Activated naive CD4-positive, alpha-beta T cell treated with anti-CD3 and anti-CD28 coated beads for 36 hours (primary cell): ENCODE measurements at regions of chr11 and their contacts with region 1.

Region 1: DNA sequence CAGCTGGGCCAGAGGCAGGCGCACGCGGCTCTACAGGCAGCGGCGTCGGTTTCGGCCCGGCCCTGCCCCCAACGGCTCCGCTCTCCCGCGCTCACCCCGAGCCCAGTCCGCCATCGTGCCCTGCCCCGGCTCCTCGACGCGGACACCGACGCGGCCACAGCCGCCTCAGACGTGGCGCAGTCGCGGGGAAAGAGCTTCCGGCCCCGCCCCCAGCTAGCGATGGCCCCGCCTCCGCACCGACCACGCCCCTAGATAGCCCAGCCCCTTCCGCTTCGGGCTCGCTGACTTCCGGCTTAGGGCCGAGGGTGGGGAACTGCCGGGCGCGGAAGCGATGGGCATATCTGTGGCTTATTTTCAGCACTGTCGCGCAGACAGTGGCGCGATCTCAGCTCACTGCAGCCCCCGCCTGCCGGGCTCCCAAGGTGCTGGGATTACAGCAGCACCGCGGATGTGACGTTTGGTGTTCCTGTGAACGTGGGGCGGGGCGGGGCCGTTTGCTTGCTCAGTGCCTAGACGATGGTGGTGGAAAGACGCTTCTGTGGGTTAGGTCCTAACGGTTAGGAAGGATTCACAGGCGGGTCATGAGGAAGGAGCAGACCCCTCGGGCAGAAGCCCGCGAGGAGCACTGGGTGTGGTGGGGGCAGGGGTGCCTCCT is at the starts of genes BET1L and RIC8A:
- DNase-seq: peak; percentile 98
- H3K4me3 Mint-ChIP-seq: peak within 1 kb of the TSS; percentile 96
- H3K27ac Mint-ChIP-seq: peak within 1 kb of the TSS; percentile 98
- H3K4me1 Mint-ChIP-seq: peaks cover 69% of the 10 kb centered on the region
- H3K27me3 Mint-ChIP-seq: no peaks in the 10 kb centered on the region
- total RNA-seq, gene BET1L: 50.4 to 51.6 TPM
- total RNA-seq, gene RIC8A: 74.9 to 85.0 TPM

Region 2: DNA sequence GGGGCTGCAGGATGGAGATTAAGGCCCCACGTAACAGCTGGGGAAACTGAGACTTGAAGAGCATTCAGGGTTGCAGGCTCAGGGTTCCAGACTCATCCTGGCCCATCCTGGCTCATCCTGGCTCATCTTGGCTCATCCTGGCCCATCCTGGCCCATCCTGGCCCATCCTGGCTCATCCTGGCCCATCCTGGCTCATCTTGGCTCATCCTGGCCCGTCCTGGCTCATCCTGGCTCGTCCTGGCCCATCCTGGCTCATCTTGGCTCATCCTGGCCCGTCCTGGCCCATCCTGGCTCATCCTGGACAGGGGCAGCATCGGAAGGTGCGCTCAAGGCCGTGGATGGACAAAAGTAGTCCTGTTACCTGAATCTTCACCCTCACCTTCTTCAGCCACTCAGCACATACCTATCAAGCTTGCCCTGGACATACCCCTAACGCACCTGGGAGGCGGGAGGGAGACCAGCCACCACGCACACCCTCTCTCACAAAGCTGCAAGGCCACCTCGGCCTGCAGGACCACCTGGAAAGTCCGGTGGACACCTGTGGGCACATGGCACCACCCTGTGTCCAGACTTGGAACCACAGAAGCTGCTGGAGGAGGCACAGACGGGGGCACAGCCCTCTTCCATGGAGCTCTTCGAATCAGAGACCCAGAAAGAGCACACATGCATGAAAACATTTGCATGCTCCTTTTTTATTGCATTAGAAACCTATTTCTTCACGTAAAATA is 50.6 kb after region 1 on chr11:
- CTCF ChIA-PET with region 1: no interaction called
- intact Hi-C with region 1: no loop called
- DNase-seq: no peak
- H3K4me3 Mint-ChIP-seq: no peak overlapping the region
- H3K27ac Mint-ChIP-seq: no peak overlapping the region
- H3K4me1 Mint-ChIP-seq: no peaks in the 10 kb centered on the region
- H3K27me3 Mint-ChIP-seq: no peaks in the 10 kb centered on the region

Region 3: GRCh38 chr11:269146-269890 is 62.0 kb after region 1 on chr11:
- CTCF ChIA-PET with region 1: no interaction called
- intact Hi-C with region 1: loop called (anchors 1 kb)
- DNase-seq: peak; percentile 80
- H3K4me3 Mint-ChIP-seq: peak overlapping the region; percentile 89
- H3K27ac Mint-ChIP-seq: peak overlapping the region; percentile 99
- H3K4me1 Mint-ChIP-seq: peaks cover 36% of the 10 kb centered on the region
- H3K27me3 Mint-ChIP-seq: no peaks in the 10 kb centered on the region

Region 4: DNA sequence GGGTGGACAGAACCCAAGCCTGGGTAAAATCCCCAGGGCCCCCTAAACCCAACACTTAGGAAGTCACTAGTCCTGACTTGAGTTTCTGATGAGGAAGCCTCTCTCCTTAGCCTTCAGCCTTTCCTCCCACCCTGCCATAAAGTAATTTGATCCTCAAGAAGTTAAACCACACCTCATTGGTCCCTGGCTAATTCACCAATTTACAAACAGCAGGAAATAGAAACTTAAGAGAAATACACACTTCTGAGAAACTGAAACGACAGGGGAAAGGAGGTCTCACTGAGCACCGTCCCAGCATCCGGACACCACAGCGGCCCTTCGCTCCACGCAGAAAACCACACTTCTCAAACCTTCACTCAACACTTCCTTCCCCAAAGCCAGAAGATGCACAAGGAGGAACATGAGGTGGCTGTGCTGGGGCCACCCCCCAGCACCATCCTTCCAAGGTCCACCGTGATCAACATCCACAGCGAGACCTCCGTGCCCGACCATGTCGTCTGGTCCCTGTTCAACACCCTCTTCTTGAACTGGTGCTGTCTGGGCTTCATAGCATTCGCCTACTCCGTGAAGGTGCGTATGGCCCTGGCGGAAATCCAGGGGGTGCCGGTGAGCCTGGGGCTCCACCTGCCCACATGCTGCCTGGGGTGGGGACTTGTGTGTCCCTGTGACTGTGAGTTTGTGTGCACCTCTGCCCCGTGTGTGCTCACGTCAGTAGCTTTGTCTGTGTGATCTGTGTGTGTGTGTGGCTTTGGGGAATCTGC is 106.6 kb after region 1 on chr11 and contains the start of gene IFITM1:
- CTCF ChIA-PET with region 1: interaction called, 3 read pairs
- intact Hi-C with region 1: loop called (anchors 1 kb)
- DNase-seq: peak; percentile 77
- H3K4me3 Mint-ChIP-seq: peak within 1 kb of the TSS; percentile 93
- H3K27ac Mint-ChIP-seq: peak within 1 kb of the TSS; percentile 95
- H3K4me1 Mint-ChIP-seq: peaks cover 22% of the 10 kb centered on the region
- H3K27me3 Mint-ChIP-seq: no peaks in the 10 kb centered on the region
- total RNA-seq, gene IFITM1: 359 to 378 TPM

Region 5: DNA sequence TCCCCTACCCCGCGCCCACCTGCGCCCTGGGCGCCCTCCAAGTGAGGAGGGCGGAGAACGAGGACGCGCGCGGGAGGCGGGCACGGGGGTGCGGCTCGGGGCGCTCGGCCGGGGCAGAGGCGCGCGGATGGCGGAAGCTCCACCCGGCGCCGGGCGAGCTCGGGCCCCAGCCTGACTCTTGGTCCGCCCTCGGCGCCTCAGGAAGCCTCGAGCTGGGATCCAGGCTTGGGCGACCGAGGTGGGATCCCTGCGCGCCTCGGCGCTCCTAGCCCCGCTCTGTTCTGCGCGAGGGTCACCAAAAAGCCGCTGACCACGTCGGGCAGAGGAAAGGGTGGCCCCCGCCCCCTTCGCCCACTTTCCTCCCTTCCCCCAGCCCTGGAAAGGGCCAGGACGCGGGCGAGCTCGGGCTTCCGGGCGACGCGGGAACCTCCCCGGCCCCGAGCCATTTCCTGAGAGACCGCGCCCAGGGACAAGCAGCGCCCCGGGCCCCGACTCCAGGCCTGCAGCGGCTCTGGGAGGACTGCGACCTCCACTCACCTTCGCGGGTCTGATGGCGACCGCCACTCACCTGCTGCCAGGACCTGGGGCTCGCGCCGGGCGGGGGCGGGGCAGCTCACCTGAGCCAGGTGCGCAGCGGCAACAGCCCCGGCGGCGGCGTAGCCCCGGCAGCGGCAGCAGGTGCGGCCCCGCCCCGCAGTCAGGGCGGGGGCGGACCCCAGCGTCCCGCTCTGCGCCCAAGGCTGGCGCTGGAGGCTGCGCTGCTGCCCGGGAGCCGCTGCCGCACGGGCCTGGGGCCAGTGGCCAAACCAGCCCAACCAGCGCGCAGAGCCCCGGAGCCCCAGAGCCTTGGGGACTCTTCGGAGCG is 209.7 kb after region 1 on chr11:
- CTCF ChIA-PET with region 1: no interaction called
- intact Hi-C with region 1: loop called (anchors 2 kb)
- DNase-seq: peak; percentile 49
- H3K4me3 Mint-ChIP-seq: peak overlapping the region; percentile 86
- H3K27ac Mint-ChIP-seq: no peak overlapping the region
- H3K4me1 Mint-ChIP-seq: peaks cover 30% of the 10 kb centered on the region
- H3K27me3 Mint-ChIP-seq: no peaks in the 10 kb centered on the region

Region 6: GRCh38 chr11:727859-728748 is 520.8 kb after region 1 on chr11:
- CTCF ChIA-PET with region 1: no interaction called
- intact Hi-C with region 1: loop called (anchors 10 kb)
- DNase-seq: peak; percentile 84
- H3K4me3 Mint-ChIP-seq: no peak overlapping the region
- H3K27ac Mint-ChIP-seq: no peak overlapping the region
- H3K4me1 Mint-ChIP-seq: peaks cover 5% of the 10 kb centered on the region
- H3K27me3 Mint-ChIP-seq: peaks cover 2% of the 10 kb centered on the region